ENCODE measurements at regions of chr3 and their contacts with region 1.

Region 1: DNA sequence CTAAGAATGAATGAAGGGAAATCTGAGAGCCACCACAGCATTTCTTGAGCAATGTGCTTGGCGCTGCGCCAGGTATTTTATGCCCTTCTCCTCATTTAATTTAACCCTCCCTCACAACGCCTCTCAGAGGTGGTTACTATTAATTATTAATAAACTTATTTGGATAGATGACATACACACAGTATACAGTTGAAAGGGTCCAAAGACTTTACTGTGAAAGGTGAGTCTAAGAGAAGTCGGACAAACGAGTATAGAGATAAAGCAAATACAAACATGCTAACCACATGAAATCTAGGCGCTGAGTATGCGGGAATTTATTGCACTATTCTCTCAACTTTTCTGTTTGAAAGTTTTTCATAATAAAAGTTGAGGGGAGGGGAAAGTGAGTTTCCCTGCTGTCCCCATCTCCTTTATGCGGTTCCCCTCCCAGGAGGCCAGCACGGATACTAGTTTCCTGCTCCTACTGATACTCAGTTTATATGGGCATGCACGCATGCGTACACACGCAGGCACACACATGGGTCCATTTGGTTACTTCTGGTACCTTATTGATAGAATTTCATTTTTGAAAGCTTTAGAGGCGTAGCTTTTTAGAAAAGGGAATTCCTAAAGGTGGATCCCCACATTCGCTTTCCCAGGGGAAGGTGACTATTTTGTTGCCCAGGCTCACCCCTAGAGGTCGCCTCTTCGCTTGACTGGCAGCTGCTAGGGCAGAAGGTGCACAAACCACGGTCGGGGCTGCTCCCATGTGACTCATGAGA is 28.5 kb upstream of the KCTD6 start:
- DNase-seq: peak; percentile 85
- H3K4me3 ChIP-seq: no peak overlapping the region; a peak in 1 of 4 replicates
- H3K27ac ChIP-seq: no peak overlapping the region
- H3K4me1 ChIP-seq: peaks cover 0 to 2% of the 10 kb centered on the region in 2 experiments; a peak in 1 of 4 replicates
- H3K27me3 ChIP-seq: no peaks in the 10 kb centered on the region
- CTCF ChIP-seq: peak; percentile 89
- EP300 ChIP-seq: no peak
- RAD21 ChIP-seq: peak; percentile 80

Region 2: DNA sequence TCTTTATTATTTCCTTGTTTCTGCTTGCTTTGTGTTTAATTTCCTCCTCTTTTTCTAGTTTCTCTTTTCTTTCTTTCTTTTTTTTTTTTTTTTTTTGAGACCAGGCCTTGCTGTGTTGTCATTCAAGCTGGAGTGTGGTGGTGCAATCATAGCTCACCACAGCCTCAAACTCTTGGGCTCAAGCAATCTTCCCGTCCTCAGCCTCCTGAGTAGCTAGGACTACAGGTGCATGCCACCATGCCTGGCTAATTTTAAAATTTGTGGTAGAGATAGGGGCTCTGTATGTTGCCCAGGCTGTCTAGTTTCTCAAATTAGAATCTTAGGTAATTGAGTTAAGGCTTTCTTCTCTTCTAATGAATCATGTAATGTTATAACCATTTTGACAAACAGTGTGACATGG is 684.9 kb before region 1 on chr3:
- CTCF ChIA-PET with region 1: no interaction called
- POLR2A ChIA-PET with region 1: no interaction called
- DNase-seq: no peak
- H3K4me3 ChIP-seq: no peak overlapping the region
- H3K27ac ChIP-seq: peak overlapping the region in 1 of 2 experiments; percentile 36; a peak in 2 of 4 replicates
- H3K4me1 ChIP-seq: no peaks in the 10 kb centered on the region; a peak in 1 of 4 replicates
- H3K27me3 ChIP-seq: no peaks in the 10 kb centered on the region
- CTCF ChIP-seq: no peak
- EP300 ChIP-seq: no peak
- RAD21 ChIP-seq: no peak

Region 3: DNA sequence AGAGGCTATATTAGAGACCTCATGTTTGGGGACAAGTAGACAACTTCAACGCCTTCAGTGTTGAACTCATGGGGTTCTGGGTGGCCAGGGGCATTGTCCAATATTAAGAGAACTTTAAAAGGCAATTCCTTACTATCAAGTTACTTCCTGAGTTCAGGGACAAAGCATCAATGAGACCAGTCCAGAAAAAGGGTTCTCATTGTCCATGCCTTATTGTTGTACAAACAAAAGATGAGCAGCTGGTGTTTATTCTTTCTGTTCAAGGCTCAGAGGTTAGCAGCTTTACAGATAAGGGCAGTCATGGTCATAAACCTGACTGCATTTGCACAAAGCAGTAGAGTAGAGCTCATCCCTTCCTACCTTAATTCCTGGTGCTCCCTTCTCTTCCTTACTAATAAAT is 11.2 kb before region 1 on chr3:
- CTCF ChIA-PET with region 1: interaction called, 18 read pairs
- POLR2A ChIA-PET with region 1: no interaction called
- DNase-seq: no peak
- H3K4me3 ChIP-seq: no peak overlapping the region
- H3K27ac ChIP-seq: no peak overlapping the region
- H3K4me1 ChIP-seq: no peaks in the 10 kb centered on the region
- H3K27me3 ChIP-seq: no peaks in the 10 kb centered on the region
- CTCF ChIP-seq: no peak
- EP300 ChIP-seq: no peak
- RAD21 ChIP-seq: no peak

Region 4: GRCh38 chr3:58491506-58492402 is 28.4 kb after region 1 on chr3 and contains the start of gene KCTD6:
- CTCF ChIA-PET with region 1: interaction called, 19 read pairs
- POLR2A ChIA-PET with region 1: no interaction called
- DNase-seq: peak; percentile 97
- H3K4me3 ChIP-seq: peak within 1 kb of the TSS; percentile 84
- H3K27ac ChIP-seq: peak within 1 kb of the TSS; percentile 21 to 85; a peak in 3 of 4 replicates
- H3K4me1 ChIP-seq: peaks cover 24 to 27% of the 10 kb centered on the region in 2 experiments
- H3K27me3 ChIP-seq: no peaks in the 10 kb centered on the region
- CTCF ChIP-seq: peak; percentile 57
- EP300 ChIP-seq: no peak; a peak in 1 of 4 replicates
- RAD21 ChIP-seq: peak; percentile 64
- polyA plus RNA-seq, gene KCTD6: 7.8 and 10.1 TPM in 2 replicates

Region 5: DNA sequence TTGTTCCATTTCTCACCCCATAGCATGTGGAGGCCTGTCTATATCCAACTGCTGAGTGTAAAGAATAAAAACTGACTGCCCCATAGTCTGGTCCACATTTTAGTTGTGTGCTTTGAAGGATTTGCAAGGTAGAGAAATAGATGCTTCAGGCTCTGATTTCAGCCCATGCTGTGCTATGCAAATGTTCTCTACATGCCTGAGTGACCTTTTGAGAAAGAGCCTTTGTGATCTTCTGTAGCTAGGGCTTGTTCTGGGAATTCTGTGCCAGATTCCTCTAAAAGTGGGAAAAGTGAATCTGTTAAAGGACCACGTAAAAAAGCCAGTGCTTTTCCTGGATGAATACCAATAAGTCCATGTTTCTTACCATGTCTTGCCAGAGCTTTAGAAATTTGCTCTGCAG is 33.7 kb after region 1 on chr3:
- CTCF ChIA-PET with region 1: interaction called, 15 read pairs
- POLR2A ChIA-PET with region 1: no interaction called
- DNase-seq: no peak
- H3K4me3 ChIP-seq: no peak overlapping the region
- H3K27ac ChIP-seq: no peak overlapping the region; a peak in 2 of 4 replicates
- H3K4me1 ChIP-seq: peaks cover 14 to 34% of the 10 kb centered on the region in 2 experiments; a peak in 3 of 4 replicates
- H3K27me3 ChIP-seq: no peaks in the 10 kb centered on the region
- CTCF ChIP-seq: no peak
- EP300 ChIP-seq: no peak
- RAD21 ChIP-seq: no peak

Region 6: GRCh38 chr3:58532794-58533220 is 69.4 kb after region 1 on chr3:
- CTCF ChIA-PET with region 1: interaction called, 32 read pairs
- POLR2A ChIA-PET with region 1: no interaction called
- DNase-seq: peak; percentile 89
- H3K4me3 ChIP-seq: peak overlapping the region in 1 of 2 experiments; percentile 17; a peak in 1 of 4 replicates
- H3K27ac ChIP-seq: no peak overlapping the region
- H3K4me1 ChIP-seq: peaks cover 12 to 32% of the 10 kb centered on the region in 2 experiments
- H3K27me3 ChIP-seq: no peaks in the 10 kb centered on the region
- CTCF ChIP-seq: peak; percentile 90
- EP300 ChIP-seq: no peak
- RAD21 ChIP-seq: peak; percentile 92